ENCODE measurements at regions of chr11 and their contacts with region 1.

Region 1: DNA sequence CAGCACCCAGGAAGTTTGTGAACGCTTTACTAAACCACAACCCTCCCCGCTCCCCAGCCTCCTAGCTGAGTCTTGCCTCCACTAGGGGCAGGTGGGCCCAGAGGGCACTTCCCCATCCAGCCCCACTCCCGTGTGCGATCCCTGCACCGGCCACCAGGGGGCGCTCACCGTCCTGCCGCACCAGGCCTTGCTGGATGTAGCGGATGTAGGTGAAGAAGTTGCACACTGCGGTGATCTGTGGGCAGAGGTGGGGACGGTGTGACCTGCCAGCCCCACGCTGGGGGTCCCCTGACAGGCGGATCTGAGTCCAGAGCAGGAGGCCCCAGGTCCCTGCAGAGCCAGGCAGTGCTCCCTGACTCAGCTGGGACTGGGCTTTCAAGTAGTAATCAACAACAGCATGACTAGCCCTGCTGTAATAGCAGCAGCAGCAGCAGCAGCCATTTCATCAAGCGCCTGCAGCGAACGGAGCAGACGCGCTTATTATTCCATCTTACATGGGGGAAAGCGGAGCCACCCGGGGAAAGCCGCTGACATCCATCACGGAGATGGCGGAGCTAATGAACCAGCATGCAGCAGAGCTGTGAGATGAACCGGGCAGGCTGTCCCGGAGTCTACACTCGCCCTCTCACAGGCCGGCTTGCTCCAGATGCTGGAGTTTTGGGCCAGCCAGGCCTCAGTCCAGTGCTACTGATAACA is 7.9 kb upstream of the FADS3 start:
- DNase-seq: peak; percentile 85 to 89 (median 85)
- ATAC-seq: peak; percentile 80 to 91 (median 88)
- H3K4me3 ChIP-seq: no peak overlapping the region
- H3K27ac ChIP-seq: no peak overlapping the region
- H3K4me1 ChIP-seq: peaks cover 0 to 3% (median 0%) of the 10 kb centered on the region in 4 donors
- H3K27me3 ChIP-seq: no peaks in the 10 kb centered on the region
- CTCF ChIP-seq: peak; percentile 99 to 100 (median 100)
- POLR2A ChIP-seq: no peak

Region 2: GRCh38 chr11:61803889-61804647 is 95.2 kb before region 1 on chr11:
- intact Hi-C with region 1: loop called in 1 of 2 experiments (anchors 10 kb)
- DNase-seq: peak in 1 of 3 donors; percentile 1
- ATAC-seq: no peak
- H3K4me3 ChIP-seq: no peak overlapping the region
- H3K27ac ChIP-seq: no peak overlapping the region
- H3K4me1 ChIP-seq: no peaks in the 10 kb centered on the region
- H3K27me3 ChIP-seq: no peaks in the 10 kb centered on the region
- CTCF ChIP-seq: no peak
- POLR2A ChIP-seq: no peak

Region 3: DNA sequence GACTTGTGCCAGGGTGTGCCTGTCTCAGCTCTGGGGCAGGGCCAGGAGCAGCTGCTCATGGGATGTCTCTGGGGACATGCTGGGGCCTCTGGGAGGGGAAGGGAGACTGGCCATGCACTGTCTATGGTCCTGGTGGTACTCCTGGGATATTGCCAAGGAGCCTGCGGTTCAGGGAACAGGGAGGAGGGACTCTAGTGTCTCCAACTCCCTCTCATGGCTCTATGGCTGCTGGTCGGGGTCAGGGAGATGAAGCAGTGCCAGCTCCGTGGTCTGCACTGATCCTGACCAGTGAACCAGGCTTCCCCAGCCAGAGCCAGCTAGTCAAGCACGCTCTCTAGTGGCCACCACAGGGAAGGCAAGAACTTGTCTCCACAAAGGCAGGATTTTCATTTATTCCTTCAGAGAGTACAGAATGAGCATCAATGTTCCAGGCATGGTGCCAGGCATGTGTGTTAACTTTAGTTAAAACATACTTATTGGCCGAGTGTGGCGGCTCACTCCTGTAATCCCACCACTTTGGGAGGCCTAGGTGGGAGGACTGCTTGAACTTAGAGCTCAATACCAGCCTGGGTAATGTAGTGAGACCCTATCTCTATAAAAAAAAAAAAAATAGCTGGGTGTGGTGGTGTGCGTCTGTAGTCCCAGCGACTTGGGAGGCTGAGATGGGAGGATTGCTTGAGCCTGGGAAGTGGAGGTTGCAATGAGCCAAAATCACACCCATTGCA is 48.4 kb after region 1 on chr11:
- intact Hi-C with region 1: loop called (anchors 5 kb)
- DNase-seq: peak; percentile 83 to 84 (median 83)
- ATAC-seq: peak; percentile 93 to 97 (median 94)
- H3K4me3 ChIP-seq: no peak overlapping the region
- H3K27ac ChIP-seq: no peak overlapping the region
- H3K4me1 ChIP-seq: peaks cover 0 to 4% (median 0%) of the 10 kb centered on the region in 4 donors
- H3K27me3 ChIP-seq: no peaks in the 10 kb centered on the region
- CTCF ChIP-seq: peak; percentile 89 to 95 (median 91)
- POLR2A ChIP-seq: no peak

Region 4: DNA sequence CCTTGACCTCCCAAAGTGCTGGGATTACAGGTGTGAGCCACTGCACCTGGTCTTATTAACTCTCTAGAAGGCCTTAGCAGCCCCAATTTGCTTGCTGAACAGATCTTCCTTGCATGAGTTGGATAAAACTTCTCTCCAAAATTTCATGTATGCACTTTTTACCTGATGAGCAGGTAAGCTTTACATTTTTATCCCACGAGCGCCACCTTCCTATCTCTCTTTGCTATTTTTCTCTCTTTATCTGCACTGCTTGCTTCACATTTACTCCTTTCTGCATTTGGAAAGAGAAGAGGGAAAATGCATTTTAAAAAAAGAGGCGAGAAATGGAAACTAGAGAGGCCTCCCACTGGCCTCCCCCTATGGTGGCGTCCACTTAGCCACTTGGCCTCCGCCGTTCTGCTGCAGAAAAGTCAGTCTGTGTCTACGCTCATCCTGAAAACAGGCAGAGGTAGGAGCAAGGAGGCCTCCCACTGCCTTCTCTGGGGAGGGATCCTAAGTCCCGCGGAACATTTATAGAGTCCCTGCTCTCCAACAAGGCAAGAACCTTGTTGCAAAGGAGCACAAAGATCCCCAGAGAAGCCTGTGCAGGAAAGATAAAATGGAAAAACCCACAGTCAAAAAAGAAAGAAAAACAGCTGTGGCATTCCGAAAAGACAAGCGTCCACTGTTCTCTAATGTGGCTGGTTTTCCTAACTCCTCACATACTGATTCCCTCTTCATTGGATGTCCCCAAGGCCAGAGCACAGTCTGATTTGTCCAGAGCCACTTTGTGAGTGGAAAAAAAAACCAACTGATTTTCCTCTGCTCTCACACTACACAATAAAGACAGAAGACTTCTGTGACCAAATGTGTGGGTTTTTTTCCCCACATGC is 162.3 kb after region 1 on chr11:
- intact Hi-C with region 1: loop called in 1 of 2 experiments (anchors 10 kb)
- DNase-seq: no peak
- ATAC-seq: no peak
- H3K4me3 ChIP-seq: no peak overlapping the region
- H3K27ac ChIP-seq: no peak overlapping the region
- H3K4me1 ChIP-seq: no peaks in the 10 kb centered on the region
- H3K27me3 ChIP-seq: no peaks in the 10 kb centered on the region
- CTCF ChIP-seq: peak in 3 of 4 donors; percentile 6 to 33 (median 14)
- POLR2A ChIP-seq: no peak

Region 5: GRCh38 chr11:62081378-62082291 is 182.3 kb after region 1 on chr11:
- intact Hi-C with region 1: loop called (anchors 5 to 10 kb)
- DNase-seq: peak; percentile 80 to 84 (median 82)
- ATAC-seq: peak; percentile 98 to 100 (median 99)
- H3K4me3 ChIP-seq: no peak overlapping the region
- H3K27ac ChIP-seq: no peak overlapping the region
- H3K4me1 ChIP-seq: no peaks in the 10 kb centered on the region
- H3K27me3 ChIP-seq: no peaks in the 10 kb centered on the region
- CTCF ChIP-seq: peak; percentile 85 to 93 (median 90)
- POLR2A ChIP-seq: no peak

Measured in right lobe of liver (tissue), 6 donors.